Ascending aorta (tissue), 2 donors: ENCODE measurements at regions of chr2 and their contacts with region 1.

Region 1: GRCh38 chr2:196639180-196640030 is at the start of gene CCDC150:
- DNase-seq: peak; percentile 75 to 96
- H3K4me3 ChIP-seq: peak within 1 kb of the TSS; percentile 70 to 72
- H3K27ac ChIP-seq: no peak within 1 kb of the TSS
- H3K4me1 ChIP-seq: peaks cover 0 to 5% of the 10 kb centered on the region in 2 donors
- H3K27me3 ChIP-seq: no peaks in the 10 kb centered on the region
- CTCF ChIP-seq: peak; percentile 12 to 51 (median 21)
- total RNA-seq, gene CCDC150: 7.1 TPM

Region 2: GRCh38 chr2:196337208-196337953 is 302.0 kb before region 1 on chr2:
- intact Hi-C with region 1: no loop called
- DNase-seq: no peak
- H3K4me3 ChIP-seq: no peak overlapping the region
- H3K27ac ChIP-seq: no peak overlapping the region
- H3K4me1 ChIP-seq: peaks cover 0 to 3% of the 10 kb centered on the region in 2 donors
- H3K27me3 ChIP-seq: no peaks in the 10 kb centered on the region
- CTCF ChIP-seq: peak in 2 of 3 experiments; percentile 32 to 48

Region 3: DNA sequence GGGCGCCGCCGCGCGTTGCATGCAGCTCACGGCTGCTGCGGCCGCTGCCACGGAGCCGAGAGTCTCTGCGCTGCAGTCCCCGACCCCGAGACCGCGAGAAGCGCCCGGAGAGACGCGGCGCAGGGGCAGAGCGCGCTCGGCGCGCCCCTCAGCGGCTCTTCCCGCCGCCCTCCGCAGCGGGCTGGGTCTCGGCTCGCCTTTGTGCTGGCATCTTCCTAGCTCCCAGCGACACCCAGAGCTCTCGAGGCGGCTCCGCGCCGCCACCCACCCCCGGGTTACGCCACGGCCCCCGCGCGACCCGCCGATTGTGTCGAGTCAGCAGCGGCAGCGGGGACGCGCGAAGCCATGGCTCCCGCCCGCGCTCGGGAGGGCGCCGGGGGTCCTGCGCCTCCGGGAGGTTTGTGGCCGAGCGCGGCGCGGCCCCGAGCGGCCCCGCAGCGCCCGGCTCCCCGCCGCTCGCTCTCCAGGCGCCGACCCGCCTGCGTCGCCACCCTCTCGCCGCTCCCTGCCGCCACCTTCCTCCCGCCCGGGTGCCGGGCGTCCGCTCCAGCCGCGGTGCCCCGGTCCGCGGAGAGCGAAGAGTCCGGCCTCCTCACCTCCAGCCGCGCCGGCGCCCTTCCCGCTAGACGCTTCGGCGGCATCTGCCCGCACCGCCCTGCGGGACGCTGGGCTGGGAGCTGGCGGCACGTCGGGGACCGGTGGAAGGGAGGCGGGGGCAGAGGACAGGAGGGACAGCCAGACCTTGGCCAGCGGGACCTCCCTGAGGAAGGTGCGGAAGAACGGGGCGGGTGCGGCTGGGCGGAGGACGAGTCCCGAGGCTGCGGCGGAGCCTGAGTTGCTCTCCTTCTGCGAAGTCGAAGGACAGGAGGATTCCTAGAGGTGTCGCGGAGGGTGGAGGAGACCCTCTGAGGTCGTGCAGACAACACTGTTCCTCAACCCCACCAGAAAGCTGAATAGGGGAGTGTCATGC is 46.2 kb before region 1 on chr2:
- intact Hi-C with region 1: loop called (anchors 2 kb)
- DNase-seq: no peak
- H3K4me3 ChIP-seq: peak within 1 kb of the TSS; percentile 70 to 71
- H3K27ac ChIP-seq: peak within 1 kb of the TSS; percentile 84 to 88
- H3K4me1 ChIP-seq: no peaks in the 10 kb centered on the region
- H3K27me3 ChIP-seq: no peaks in the 10 kb centered on the region
- CTCF ChIP-seq: no peak

Region 4: DNA sequence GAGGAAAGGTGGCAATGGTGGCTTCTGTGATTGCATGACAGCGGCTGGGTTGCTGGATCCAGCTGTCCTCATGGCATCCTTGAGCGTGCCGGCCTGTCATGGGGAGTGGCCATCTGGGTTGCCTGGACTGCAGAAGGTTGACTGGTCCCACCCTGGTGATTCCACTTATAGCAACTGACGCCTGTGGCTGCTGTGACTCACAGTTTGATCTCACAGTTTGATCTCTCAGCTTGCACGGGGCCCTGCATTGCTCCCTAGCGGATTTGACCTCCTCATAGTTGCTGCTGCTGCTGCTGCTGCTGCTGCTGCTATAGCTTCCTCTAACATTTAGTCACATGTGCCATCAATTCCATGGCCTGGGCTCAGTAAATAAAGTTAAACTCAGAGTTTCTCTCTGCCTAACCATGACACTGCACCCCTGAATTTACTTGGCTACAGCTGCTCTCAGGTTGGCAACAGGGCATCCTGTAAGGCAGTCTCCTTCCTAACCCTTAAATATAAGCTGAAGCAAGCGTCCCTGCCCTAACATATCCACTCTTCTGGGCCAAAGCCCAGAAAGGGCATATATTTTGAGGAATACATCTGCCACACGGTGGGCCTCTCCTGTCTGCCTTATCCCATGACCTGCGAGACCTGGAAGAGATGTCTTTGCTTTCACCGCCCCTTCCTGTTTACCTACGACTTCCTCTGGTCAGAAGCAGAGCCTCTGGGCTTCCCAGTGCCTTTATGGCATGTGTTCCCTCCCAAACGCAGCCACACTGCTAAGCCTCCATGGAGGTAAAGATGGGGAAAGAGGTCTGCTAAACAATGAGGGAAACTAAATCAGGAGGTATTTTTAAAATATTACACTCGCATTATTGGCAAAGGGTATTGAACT is 37.7 kb before region 1 on chr2:
- intact Hi-C with region 1: loop called (anchors 2 kb)
- DNase-seq: peak; percentile 61 to 91
- H3K4me3 ChIP-seq: peak overlapping the region in 1 of 2 donors; percentile 1
- H3K27ac ChIP-seq: peak overlapping the region; percentile 84 to 85
- H3K4me1 ChIP-seq: peaks cover 5 to 11% of the 10 kb centered on the region in 2 donors
- H3K27me3 ChIP-seq: no peaks in the 10 kb centered on the region
- CTCF ChIP-seq: peak in 1 of 3 experiments; percentile 10

Region 5: DNA sequence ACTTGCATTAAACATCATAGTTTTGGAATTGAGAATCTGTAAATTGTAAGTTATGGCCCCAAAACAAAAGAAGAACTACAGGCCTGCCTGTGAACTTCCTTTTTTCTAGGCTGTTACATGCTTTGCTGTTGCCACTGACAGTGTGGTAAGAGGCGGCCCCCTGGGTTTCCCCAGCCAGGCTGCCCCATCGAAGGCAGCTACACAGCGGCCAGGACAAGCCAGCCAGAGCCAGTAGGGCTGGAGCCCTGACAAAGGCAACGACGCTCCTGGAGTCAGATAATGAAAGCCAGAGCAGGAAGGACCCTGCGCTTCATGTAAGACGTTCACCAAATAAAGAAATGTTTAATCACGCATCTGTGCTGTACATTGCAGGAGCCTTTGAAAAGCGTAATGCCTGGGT is 616.1 kb after region 1 on chr2:
- intact Hi-C with region 1: no loop called
- DNase-seq: peak; percentile 45 to 84
- H3K4me3 ChIP-seq: peak overlapping the region in 1 of 2 donors; percentile 35
- H3K27ac ChIP-seq: peak overlapping the region; percentile 55 to 59
- H3K4me1 ChIP-seq: peaks cover 0 to 12% of the 10 kb centered on the region in 2 donors
- H3K27me3 ChIP-seq: no peaks in the 10 kb centered on the region
- CTCF ChIP-seq: no peak